GM10248 (cell line): ENCODE measurements at regions of chr20 and their contacts with region 1.

Region 1: DNA sequence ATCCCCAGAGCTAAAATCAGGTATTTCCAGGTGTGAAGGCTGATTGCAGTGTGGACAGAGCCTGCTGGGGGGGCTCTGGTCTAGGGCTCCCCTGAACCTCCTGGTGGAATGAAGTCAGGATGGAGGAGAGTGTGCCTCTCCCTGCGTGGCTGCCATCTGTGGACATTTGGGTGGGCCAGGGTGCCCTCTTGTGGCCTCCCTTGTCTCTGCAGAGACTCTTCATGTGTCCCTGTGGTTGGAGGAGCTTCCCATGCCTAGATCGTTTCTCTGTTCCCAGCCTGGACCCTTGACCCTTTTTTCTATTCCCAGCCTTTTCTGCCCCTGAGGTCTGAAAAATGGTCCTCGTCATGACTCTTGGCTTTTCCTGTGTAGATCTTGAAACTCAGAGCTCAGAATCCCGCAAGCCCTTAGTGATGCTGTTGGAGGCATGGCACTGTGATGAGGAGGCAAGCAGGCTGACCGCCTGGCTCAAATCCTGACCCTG is 9.9 kb upstream of the PSMF1 start:
- DNase-seq: peak; percentile 71
- CTCF ChIP-seq: peak; percentile 83

Region 2: GRCh38 chr20:1087311-1087905 is 21.1 kb before region 1 on chr20:
- CTCF ChIA-PET with region 1: interaction called, 57 read pairs
- POLR2A ChIA-PET with region 1: no interaction called
- DNase-seq: no peak
- CTCF ChIP-seq: no peak

Region 3: GRCh38 chr20:1094751-1095150 is 13.7 kb before region 1 on chr20:
- CTCF ChIA-PET with region 1: interaction called, 57 read pairs
- POLR2A ChIA-PET with region 1: no interaction called
- DNase-seq: no peak
- CTCF ChIP-seq: no peak

Region 4: GRCh38 chr20:1118336-1119127 is 10.1 kb after region 1 on chr20 and contains the start of gene PSMF1:
- CTCF ChIA-PET with region 1: interaction called, 45 read pairs
- POLR2A ChIA-PET with region 1: no interaction called
- DNase-seq: peak; percentile 95
- CTCF ChIP-seq: no peak

Region 5: GRCh38 chr20:1274485-1275311 is 166.2 kb after region 1 on chr20:
- CTCF ChIA-PET with region 1: no interaction called
- POLR2A ChIA-PET with region 1: no interaction called
- DNase-seq: no peak
- CTCF ChIP-seq: no peak